A673 (cell line): ENCODE measurements at regions of chr7 and their contacts with region 1.

Region 1: GRCh38 chr7:111486472-111487142 is 75.7 kb downstream of the IMMP2L start:
- DNase-seq: peak; percentile 67
- H3K4me3 ChIP-seq: no peak overlapping the region
- H3K27ac ChIP-seq: no peak overlapping the region
- H3K4me1 ChIP-seq: peaks cover 8% of the 10 kb centered on the region
- H3K27me3 ChIP-seq: no peaks in the 10 kb centered on the region
- CTCF ChIP-seq: peak; percentile 80

Region 2: DNA sequence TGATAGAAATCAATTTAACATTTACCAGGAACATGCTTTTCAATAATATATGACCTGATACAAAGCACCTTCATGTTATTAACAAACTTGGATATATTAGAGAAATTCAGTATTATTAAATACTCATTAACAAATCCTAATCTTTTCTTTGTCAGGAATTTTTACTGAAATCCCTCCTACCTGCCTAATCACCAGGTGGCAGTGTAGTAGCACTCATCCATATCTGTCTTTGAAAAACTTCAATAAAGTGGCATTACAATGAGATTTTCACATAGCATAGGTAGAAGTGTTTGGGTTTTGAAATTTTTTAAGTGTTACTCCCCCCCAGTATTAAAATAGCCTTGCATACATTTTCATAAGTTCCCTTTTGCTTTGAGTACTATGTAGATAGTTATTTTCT is 1642.2 kb before region 1 on chr7:
- CTCF ChIA-PET with region 1: no interaction called
- POLR2A ChIA-PET with region 1: no interaction called
- intact Hi-C with region 1: loop called (anchors 10 kb)
- DNase-seq: peak; percentile 2
- H3K4me3 ChIP-seq: no peak overlapping the region
- H3K27ac ChIP-seq: no peak overlapping the region
- H3K4me1 ChIP-seq: no peaks in the 10 kb centered on the region
- H3K27me3 ChIP-seq: no peaks in the 10 kb centered on the region
- CTCF ChIP-seq: peak; percentile 46; the same call in 1 of the 2 replicates

Region 3: DNA sequence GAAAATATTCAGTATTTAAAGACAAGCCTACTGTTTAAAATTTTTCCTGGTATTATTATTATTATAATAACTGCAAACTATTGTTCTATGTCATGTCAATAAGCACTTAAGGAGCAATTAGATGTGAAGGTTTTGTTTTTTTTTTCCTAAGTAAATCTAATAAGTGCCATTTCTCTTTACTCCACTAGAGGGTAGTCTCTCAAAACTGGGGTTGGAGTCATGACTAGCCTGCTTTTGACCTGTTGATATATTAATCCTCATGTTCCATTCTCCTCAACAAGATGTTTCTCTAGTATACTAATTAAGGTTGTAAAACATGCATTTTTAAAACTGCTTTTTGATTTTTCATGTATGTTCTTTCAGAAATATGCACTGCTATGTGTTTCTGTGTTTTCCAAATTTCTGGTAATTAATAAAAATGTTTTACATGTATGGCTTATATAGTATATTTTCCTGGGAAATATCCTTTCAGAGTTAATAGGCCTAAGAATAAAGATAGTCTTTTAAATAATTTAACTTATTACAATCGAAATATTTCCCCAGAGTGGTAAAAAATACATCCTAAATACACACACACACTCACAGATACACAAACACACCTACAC is 396.7 kb before region 1 on chr7:
- CTCF ChIA-PET with region 1: no interaction called
- POLR2A ChIA-PET with region 1: no interaction called
- intact Hi-C with region 1: loop called (anchors 5 kb)
- DNase-seq: peak; percentile 58
- H3K4me3 ChIP-seq: no peak overlapping the region
- H3K27ac ChIP-seq: no peak overlapping the region
- H3K4me1 ChIP-seq: peaks cover 20% of the 10 kb centered on the region
- H3K27me3 ChIP-seq: no peaks in the 10 kb centered on the region
- CTCF ChIP-seq: peak; percentile 76

Region 4: DNA sequence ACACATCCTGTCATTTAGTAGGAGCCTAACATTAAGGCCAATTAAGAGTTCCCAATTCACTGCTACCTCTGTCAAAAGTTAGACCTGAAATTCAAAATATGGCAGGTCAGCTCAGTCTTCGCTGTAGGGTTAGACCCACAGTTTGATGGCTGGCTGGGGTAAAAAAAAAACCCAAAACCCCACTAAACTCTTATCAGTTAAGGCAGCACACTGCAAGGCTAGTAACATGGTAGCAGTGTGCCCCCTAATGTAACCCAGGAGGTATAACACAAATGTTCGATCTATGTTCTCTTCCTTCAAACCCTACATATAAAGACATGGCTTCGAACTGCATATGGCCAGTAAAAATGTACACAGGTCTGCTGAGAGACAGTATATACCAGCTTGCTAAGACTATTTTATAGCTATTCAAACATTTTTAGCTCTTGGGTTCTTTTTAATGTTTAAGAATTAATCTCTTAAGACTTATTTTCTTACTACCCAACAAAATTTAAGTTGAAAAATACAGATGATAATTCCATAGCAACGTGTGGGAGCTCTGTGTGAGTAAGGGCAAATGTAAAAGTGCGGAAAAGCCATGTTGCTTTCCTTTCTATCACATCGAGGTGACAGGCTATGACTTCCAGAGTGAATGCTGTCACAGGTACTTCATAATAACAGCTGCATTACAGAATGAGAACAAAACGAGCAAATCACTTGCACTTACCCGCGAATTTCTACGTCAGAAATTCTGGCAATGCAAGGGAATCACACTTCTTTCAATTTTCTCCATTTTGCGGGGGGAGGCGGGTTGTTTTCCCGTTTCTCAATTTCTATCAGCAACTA is 244.1 kb after region 1 on chr7:
- CTCF ChIA-PET with region 1: no interaction called
- POLR2A ChIA-PET with region 1: no interaction called
- intact Hi-C with region 1: loop called (anchors 5 kb)
- DNase-seq: peak; percentile 61
- H3K4me3 ChIP-seq: no peak overlapping the region
- H3K27ac ChIP-seq: no peak overlapping the region
- H3K4me1 ChIP-seq: no peaks in the 10 kb centered on the region
- H3K27me3 ChIP-seq: no peaks in the 10 kb centered on the region
- CTCF ChIP-seq: peak; percentile 73